ENCODE measurements at regions of chr14 and their contacts with region 1.

Region 1: DNA sequence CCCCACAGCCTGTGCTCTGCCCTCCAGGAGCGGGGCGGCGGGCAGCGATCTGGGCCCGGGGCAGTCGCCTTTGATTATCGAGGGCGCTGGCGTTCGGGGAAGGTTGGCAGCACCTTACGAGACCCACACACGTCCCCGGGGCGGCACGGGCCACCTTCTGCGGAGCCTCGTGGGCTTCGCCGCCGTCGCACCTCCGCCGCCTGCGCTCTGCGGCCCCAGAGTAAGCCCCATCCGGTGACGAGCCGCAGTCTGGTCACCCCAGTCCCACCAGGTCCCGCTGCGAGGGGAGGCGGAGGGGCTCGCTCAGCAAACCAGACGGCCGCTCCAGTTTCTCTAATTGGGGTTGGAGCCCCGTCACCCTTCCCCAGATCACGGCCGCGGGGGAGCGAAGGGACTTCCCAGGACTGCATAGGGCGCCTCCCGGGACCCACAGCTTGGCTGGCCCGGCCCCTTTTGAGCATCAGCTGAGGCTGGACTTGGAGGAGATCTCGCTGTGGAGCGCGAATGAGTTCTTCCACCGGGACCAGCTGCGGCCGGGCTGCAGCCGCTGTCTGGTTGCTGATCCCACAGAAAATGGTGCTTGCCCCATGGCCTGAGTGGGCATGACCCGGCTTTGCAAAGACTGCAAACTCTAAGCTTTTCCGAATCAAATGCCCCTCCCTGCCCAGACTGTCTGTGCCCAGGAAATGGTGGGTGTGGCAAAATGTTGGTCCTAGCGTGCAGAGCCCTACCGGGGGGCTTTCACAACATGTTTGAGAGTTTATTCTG is 560 bp downstream of the LGALS3 start:
- DNase-seq: no peak
- H3K4me3 ChIP-seq: peak overlapping the region; percentile 74
- CTCF ChIP-seq: no peak

Region 2: DNA sequence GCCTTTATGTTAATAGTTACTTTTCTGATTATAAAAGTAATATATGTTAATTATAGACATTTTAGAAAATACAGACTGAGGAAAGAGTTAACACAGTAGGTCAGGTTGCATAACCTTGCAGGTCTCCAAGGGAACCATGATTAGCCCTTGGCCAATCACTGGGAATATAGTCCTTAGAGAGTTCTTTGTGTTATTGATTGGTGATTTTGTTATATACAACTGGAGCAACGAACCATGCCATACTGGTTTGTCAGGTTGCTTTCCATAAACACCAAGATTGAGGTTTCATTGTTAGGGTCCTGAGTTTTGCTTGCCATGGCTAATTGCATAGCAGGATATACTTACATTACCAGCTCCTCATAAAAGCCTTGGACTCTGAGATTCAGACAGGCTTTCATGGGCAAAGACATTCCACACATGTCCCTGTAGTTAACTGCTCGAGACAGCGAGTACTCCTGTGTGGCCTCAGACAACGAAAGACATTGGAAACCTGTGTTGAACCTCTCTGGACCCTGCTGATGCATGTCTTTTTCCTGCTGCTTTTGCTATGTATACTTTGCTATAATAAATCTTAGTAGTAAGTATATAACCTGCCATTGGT is 44.5 kb before region 1 on chr14:
- CTCF ChIA-PET with region 1: interaction called, 38 read pairs
- POLR2A ChIA-PET with region 1: no interaction called
- DNase-seq: no peak
- H3K4me3 ChIP-seq: no peak overlapping the region
- CTCF ChIP-seq: no peak

Region 3: GRCh38 chr14:55094321-55095157 is 35.1 kb before region 1 on chr14:
- CTCF ChIA-PET with region 1: interaction called, 38 read pairs
- POLR2A ChIA-PET with region 1: interaction called, 3 read pairs
- DNase-seq: no peak
- H3K4me3 ChIP-seq: no peak overlapping the region
- CTCF ChIP-seq: no peak

Region 4: DNA sequence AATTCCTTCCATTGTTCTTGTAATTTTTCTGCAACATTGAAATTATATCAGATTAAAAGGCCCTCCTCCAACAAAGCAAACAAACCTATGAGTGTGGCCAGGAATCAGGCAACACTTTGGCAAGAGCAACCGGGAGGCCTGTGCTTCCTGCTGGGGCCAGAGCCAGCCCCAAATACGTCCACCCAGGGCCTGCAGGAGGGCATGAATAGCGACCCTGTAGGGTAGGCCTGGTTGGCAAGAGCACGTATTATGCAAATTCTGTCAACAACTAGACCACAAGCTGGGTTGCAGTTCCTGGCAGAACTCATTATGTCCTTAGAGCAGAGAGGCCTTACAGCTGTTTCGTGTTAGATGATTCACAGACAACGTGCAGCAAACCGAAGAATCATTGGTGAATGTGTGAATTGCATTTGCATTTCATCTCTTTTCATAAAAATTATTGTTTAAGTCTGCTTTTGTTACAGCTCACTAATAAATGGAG is 27.4 kb before region 1 on chr14:
- CTCF ChIA-PET with region 1: interaction called, 3 read pairs
- POLR2A ChIA-PET with region 1: interaction called, 11 read pairs
- DNase-seq: peak; percentile 98
- H3K4me3 ChIP-seq: no peak overlapping the region
- CTCF ChIP-seq: no peak

Region 5: GRCh38 chr14:55354500-55354899 is 224.9 kb after region 1 on chr14:
- CTCF ChIA-PET with region 1: no interaction called
- POLR2A ChIA-PET with region 1: no interaction called
- DNase-seq: no peak
- H3K4me3 ChIP-seq: no peak overlapping the region
- CTCF ChIP-seq: peak; percentile 49

Measured in AG04449 (cell line).